Motor neuron (in vitro differentiated cells): ENCODE measurements at regions of chr4 and their contacts with region 1.

Region 1: DNA sequence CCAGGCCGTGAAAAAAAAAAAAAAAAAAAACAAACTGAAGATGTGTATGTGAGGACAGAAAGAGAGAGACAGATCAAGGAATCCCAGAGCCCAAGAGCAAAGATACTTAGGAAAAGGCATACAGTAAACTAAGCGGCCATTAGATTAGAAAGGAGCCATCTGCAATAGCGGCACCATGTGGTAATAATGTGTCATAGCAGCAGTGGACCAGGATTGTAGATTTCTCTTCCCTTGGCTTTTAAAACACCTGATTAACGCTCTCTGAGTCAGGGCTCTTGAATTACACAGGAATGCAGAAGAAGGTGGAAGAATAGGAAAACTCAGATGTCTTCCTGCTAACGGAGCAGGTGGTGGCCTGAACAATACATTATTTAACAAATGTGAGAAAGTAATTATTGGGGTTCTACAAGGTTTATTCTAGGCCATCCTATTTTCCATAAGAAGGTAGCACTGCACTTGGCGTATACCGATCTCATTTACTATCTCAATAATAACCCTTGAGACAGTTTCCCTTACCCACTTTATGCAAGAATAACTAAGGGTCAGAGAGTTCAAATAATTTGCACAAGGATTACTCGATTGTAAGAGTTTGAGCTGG is 182.7 kb downstream of the KCNIP4 start:
- ATAC-seq: peak; percentile 60 to 84 (median 71)
- H3K4me3 ChIP-seq: no peak overlapping the region
- H3K27ac ChIP-seq: no peak overlapping the region
- H3K4me1 ChIP-seq: no peaks in the 10 kb centered on the region

Region 2: DNA sequence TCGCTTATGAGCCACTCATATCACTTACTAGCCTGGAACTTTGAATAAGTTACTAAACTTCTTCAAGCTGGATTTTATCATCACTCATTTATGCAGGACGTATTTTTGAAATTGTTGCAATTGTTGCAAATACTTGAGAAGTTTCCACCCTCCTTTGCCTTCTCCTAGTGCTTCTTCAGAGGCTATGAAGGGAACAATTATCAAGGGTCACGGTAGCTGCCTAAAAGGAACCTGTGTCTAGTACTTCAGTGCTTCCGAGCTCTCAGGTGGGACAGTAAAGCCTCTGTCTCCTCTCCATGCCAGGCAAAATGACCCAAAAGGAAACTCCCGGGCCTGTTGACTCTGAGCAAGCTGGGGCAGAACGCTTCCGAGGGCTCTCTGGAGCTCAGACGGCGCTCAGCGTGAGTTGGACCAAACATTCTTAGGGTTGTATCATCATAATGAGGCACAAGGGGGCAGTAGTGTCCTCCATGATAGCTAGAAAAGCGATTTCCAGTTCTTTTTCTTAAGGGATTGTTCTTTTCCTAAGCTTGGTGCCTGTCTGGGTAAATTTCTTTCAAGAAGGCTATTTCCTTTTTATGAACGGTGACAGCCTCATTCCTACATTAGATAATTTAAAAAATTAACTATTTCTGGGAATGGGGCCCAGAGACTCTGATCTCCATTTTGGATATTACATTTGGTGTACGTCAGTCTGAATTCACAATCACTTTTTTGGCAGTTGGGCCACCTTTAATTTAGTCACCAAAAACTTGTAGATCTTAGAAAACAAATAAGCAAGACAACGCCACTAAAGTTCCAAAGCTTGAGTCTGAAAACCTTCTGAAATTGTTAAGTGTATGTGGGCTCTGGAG is 992.5 kb before region 1 on chr4:
- in situ Hi-C with region 1: loop called in 3 of 9 experiments (anchors 25 kb)
- ATAC-seq: peak; percentile 42 to 85 (median 64)
- H3K4me3 ChIP-seq: no peak overlapping the region
- H3K27ac ChIP-seq: no peak overlapping the region
- H3K4me1 ChIP-seq: no peaks in the 10 kb centered on the region

Region 3: DNA sequence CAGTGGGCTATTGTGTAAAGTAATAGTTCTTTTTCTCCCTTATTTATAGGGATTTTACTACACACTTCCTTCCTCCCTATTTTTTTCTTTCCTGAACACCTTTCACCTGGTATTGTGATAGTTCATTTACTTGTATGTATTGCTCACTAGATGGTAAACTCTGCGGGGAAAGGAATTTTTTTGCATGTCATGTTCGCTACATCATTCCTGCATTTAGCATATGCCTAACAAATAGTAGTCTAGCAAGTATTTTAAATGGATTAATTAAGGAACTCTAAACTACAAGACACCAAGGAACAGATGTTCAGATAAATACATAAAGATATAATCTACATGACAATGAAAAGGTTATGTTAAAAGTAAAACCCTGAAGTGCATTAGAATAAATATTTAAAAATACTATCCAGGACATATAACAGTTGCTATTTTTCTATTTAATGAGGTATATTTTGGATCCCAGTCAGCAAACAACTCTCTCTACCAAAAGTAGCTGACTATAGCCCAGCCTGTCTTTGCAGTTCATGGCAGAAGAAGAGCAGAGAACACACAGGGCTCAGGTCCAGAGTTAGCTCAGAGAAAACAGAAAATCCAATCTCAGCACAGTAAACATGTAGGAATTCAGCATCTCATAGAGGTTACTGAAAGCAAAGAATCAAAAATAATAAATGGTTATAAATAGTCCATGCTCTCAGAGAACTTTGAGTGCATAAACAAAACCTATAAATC is 977.8 kb before region 1 on chr4:
- in situ Hi-C with region 1: loop called in 2 of 9 experiments (anchors 25 kb)
- ATAC-seq: peak in 2 of 8 experiments; percentile 51 to 65
- H3K4me3 ChIP-seq: no peak overlapping the region
- H3K27ac ChIP-seq: no peak overlapping the region
- H3K4me1 ChIP-seq: peaks cover 0 to 9% of the 10 kb centered on the region in 2 donors

Region 4: DNA sequence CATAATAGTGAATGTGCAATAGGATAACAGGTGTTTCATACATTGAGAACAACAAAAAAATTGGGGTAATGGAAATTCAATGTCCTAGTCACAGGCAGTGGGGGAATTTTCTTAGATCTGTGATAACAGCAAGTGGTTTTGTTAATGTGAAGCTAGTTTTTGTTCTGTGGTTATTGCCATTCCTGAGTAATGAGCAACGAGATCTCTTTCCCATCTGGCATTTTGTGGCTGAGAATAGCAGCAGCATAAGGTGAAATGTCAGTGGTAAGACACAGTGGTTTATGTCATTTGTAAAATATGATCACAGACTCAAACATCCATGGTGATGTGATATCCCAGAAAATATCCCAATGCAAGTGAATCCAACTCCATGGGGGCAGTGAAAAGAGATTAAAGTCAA is 314.9 kb before region 1 on chr4:
- in situ Hi-C with region 1: no loop called
- ATAC-seq: peak in 3 of 8 experiments; percentile 44 to 63 (median 48)
- H3K4me3 ChIP-seq: no peak overlapping the region
- H3K27ac ChIP-seq: no peak overlapping the region
- H3K4me1 ChIP-seq: peaks cover 2 to 8% of the 10 kb centered on the region in 2 donors

Region 5: GRCh38 chr4:21512353-21512752 is 253.6 kb before region 1 on chr4:
- in situ Hi-C with region 1: loop called (anchors 5 to 25 kb)
- ATAC-seq: peak; percentile 60 to 88 (median 72)
- H3K4me3 ChIP-seq: no peak overlapping the region
- H3K27ac ChIP-seq: no peak overlapping the region
- H3K4me1 ChIP-seq: peaks cover 0 to 3% of the 10 kb centered on the region in 2 donors

Region 6: GRCh38 chr4:21592970-21593670 is 172.8 kb before region 1 on chr4:
- in situ Hi-C with region 1: no loop called
- ATAC-seq: peak in 4 of 8 experiments; percentile 30 to 76 (median 51)
- H3K4me3 ChIP-seq: no peak overlapping the region
- H3K27ac ChIP-seq: no peak overlapping the region
- H3K4me1 ChIP-seq: peaks cover 4 to 20% of the 10 kb centered on the region in 2 donors